ENCODE measurements at regions of chr12 and their contacts with region 1.

Region 1: GRCh38 chr12:45990468-45991283 is at the start of gene SCAF11:
- DNase-seq: peak; percentile 100
- H3K4me3 Mint-ChIP-seq: peak within 1 kb of the TSS; percentile 94
- H3K27ac Mint-ChIP-seq: peak within 1 kb of the TSS; percentile 99
- H3K4me1 Mint-ChIP-seq: peaks cover 36% of the 10 kb centered on the region
- H3K27me3 Mint-ChIP-seq: no peaks in the 10 kb centered on the region
- total RNA-seq, gene SCAF11: 95.0 to 97.7 TPM

Region 2: GRCh38 chr12:45170456-45171042 is 820.1 kb before region 1 on chr12:
- CTCF ChIA-PET with region 1: no interaction called
- intact Hi-C with region 1: loop called (anchors 10 kb)
- DNase-seq: peak; percentile 92
- H3K4me3 Mint-ChIP-seq: no peak overlapping the region
- H3K27ac Mint-ChIP-seq: no peak overlapping the region
- H3K4me1 Mint-ChIP-seq: no peaks in the 10 kb centered on the region
- H3K27me3 Mint-ChIP-seq: no peaks in the 10 kb centered on the region

Region 3: GRCh38 chr12:45670346-45671065 is 320.2 kb before region 1 on chr12:
- CTCF ChIA-PET with region 1: no interaction called
- intact Hi-C with region 1: loop called (anchors 5 kb)
- DNase-seq: no peak
- H3K4me3 Mint-ChIP-seq: no peak overlapping the region
- H3K27ac Mint-ChIP-seq: no peak overlapping the region
- H3K4me1 Mint-ChIP-seq: peaks cover 30% of the 10 kb centered on the region
- H3K27me3 Mint-ChIP-seq: peaks cover 7% of the 10 kb centered on the region

Region 4: DNA sequence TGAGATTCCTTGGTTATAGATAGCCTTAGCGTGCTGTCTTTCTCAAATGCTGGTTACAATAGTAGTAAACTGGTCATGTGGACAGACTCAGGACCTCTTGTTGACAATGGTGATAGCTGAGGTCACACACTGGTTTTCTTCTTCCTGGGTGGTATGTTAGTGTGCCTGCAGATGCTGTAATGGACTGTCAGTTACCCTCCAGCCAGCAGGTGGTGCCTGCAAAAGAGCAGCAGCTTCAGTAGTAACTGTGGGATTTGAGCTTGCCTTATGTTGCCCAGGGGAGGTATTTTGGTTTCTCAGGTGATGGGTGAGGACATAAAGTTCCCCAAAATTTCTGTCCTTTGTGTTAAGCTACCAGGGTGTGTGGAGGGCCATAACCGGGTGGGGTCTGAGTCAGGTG is 33.4 kb after region 1 on chr12:
- CTCF ChIA-PET with region 1: no interaction called
- intact Hi-C with region 1: no loop called
- DNase-seq: no peak
- H3K4me3 Mint-ChIP-seq: no peak overlapping the region
- H3K27ac Mint-ChIP-seq: no peak overlapping the region
- H3K4me1 Mint-ChIP-seq: no peaks in the 10 kb centered on the region
- H3K27me3 Mint-ChIP-seq: peaks cover 8% of the 10 kb centered on the region

Region 5: DNA sequence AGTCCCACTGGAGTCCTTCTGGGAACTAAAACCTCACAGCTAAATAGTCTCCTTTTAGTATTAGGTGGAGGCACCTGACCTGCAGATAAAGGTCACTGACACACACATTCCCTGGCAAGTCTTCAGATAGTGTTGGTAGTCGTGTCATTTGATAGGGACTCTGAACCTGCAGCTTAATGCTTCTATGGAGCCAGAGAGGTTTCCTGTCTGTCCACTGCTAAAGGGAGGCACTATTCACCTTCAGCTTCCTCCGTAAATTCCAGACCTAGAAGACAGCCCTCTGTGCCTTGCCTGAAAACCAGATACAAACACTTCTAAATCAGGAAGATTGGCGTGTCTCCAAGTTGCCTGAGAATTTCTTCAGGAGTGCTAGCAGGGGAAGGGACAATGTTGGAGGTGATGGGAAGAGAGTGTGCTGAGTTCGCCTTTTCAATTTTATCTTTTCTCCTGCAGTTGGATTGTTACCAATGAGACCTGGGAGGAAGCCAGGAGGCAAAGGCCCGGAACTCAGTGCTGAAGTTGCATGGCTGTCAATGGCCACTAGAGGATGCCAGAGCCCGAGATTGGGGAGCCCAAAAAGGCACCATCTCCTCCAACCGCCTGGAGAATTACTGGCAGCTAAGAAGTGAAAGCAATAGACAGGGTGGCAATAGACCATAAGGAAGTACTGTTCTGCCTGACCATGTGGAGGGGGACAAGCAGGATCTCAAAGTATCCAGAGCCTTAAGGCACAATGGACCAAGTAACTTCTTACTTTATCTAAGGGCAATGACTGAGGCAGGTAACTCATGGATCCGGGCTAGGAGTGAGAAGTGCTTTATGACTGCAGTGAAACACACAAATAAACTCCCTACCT is 81.3 kb after region 1 on chr12:
- CTCF ChIA-PET with region 1: interaction called, 4 read pairs
- intact Hi-C with region 1: loop called (anchors 1 kb)
- DNase-seq: peak; percentile 82
- H3K4me3 Mint-ChIP-seq: peak overlapping the region; percentile 20
- H3K27ac Mint-ChIP-seq: peak overlapping the region; percentile 19
- H3K4me1 Mint-ChIP-seq: peaks cover 3% of the 10 kb centered on the region
- H3K27me3 Mint-ChIP-seq: no peaks in the 10 kb centered on the region

Region 6: DNA sequence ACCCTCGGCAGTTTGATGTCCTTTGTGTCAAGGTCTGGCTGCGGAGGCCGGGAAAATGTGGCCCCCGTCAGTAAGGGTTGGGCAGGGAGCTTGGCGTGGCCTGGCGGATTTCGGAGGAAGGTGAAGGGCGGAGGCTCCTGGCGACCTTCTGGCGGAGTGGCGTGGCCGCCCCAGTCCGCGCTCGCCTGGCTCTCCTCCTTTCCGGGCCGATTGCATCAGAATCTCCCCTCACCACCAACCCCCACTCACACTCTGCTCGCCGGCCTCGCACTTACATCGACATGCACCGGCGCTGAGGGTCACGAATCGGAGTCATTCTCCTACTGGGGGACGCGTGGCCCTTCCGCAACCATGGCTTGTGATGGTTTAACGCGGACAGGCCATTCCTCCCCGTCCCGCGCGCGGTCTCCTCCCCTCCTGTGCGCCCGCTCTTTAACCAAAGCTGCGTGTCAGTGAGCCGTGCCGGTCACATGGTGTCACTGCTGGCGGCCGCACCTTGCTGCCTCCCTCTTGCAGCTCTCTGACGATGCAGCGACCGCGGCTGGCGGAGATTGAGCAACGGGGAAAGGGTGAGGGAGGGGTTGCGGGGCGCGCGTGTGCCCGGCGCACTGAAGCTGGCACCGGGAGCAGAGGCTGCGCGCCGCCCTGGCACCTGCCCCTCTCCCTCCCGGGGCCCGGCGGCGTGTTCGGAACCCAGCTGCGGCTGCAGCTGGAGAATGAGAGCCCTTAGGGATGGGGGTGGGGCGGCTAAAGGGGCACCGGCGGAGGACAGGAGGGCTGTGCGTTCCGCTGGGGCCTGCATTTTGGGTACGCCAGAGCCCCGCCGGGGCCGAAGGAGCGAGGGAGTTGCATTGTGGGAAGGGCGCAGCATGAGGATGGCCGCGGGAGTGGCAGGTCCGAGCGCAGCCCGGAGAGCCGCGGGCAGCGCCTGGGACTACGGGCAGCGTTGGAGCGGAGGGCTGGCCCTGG is 278.2 kb after region 1 on chr12 and contains the start of gene SLC38A1:
- CTCF ChIA-PET with region 1: no interaction called
- intact Hi-C with region 1: loop called (anchors 1 kb)
- DNase-seq: peak; percentile 92
- H3K4me3 Mint-ChIP-seq: no peak within 1 kb of the TSS
- H3K27ac Mint-ChIP-seq: no peak within 1 kb of the TSS
- H3K4me1 Mint-ChIP-seq: peaks cover 34% of the 10 kb centered on the region
- H3K27me3 Mint-ChIP-seq: no peaks in the 10 kb centered on the region
- total RNA-seq, gene SLC38A1: 105 to 110 TPM

Region 7: DNA sequence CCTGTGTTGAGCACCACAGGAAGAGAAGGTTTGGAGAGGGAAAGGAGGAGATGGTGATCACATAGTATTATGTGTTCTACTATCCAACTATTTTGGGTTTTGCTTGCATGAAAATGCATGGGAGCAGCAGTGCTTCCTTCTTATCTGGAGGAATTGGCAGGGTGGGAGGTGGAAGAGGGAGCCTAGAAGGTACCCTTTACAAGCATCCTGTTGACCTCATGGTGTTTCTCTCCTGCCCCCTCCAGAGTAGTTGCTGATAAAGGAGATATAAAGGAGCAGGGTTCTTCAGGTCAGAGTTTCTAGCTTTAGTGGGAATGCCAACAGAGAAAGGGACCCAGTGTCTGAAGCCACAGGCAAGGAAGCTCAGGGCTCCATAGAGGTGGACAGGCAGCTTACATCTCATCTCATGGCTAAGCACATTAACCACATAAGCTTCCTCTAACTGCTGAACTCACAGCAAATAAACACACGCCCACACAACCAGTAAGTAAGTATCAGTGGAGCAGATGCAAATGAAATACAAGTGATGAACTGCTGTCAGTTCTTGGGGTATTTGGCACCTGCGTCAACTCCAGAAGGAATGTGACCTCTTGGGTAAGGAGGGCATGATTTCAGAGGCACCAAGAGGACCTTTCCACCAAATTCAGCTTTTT is 556.1 kb after region 1 on chr12:
- CTCF ChIA-PET with region 1: no interaction called
- intact Hi-C with region 1: loop called (anchors 1 kb)
- DNase-seq: peak; percentile 45
- H3K4me3 Mint-ChIP-seq: no peak overlapping the region
- H3K27ac Mint-ChIP-seq: peak overlapping the region; percentile 74
- H3K4me1 Mint-ChIP-seq: peaks cover 58% of the 10 kb centered on the region
- H3K27me3 Mint-ChIP-seq: no peaks in the 10 kb centered on the region

Region 8: DNA sequence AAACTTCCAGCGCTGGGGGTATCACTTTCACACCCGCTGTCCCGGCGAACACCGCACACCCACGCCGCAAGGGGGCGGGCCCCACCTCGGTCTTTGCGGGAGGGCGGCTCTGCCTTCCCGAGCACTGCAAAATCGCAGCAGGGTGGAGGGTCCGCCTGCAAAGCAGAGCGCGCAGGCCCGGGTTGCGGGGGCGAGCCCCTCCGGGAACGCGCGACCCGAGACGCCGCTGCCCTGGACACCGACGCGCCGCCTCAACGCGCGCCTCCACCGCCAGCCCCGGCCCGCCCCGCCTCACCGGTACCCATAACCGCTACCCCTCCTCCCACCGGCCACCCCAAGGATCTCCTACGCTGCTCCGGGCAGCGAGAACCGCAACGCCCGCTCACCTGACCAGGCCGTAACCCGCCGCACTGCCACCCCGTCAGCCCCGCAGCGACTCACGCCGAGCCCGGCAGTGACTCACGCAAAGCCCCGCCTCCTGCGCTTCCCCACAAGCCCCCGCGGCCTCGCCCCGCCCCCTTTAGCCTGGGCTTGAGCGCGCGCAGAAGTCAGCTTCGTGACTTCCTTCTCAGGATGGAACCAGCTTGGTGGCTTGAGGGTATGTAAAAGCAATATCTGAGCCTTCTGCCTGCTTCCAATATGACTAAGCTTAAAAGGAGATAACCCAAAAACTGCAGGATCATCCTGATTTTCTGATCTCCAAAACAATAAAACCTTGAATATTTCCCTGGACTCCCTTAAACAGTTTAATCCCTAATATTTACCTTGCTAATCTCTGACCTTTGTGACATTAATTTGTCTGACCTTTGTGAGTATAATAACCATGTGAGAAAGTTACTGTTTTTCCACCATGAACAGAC is 1715.1 kb after region 1 on chr12 and contains the start of gene RPAP3:
- CTCF ChIA-PET with region 1: no interaction called
- intact Hi-C with region 1: loop called (anchors 10 kb)
- DNase-seq: peak; percentile 99
- H3K4me3 Mint-ChIP-seq: peak within 1 kb of the TSS; percentile 93
- H3K27ac Mint-ChIP-seq: peak within 1 kb of the TSS; percentile 98
- H3K4me1 Mint-ChIP-seq: peaks cover 49% of the 10 kb centered on the region
- H3K27me3 Mint-ChIP-seq: no peaks in the 10 kb centered on the region
- total RNA-seq, gene RPAP3: 46.2 to 46.7 TPM